Esophagus muscularis mucosa (tissue), 4 donors: ENCODE measurements at regions of chr6 and their contacts with region 1.

Region 1: GRCh38 chr6:912871-913835 is 220.2 kb upstream of the EXOC2 start:
- DNase-seq: no peak
- H3K4me3 ChIP-seq: no peak overlapping the region
- H3K27ac ChIP-seq: peak overlapping the region in 1 of 4 donors; percentile 26
- H3K4me1 ChIP-seq: peaks cover 0 to 15% (median 13%) of the 10 kb centered on the region in 4 donors
- H3K27me3 ChIP-seq: no peaks in the 10 kb centered on the region
- CTCF ChIP-seq: peak; percentile 56 to 74 (median 65)
- EP300 ChIP-seq: no peak
- POLR2A ChIP-seq: no peak

Region 2: GRCh38 chr6:958531-958930 is 45.4 kb after region 1 on chr6:
- intact Hi-C with region 1: no loop called
- DNase-seq: no peak
- H3K4me3 ChIP-seq: no peak overlapping the region
- H3K27ac ChIP-seq: no peak overlapping the region
- H3K4me1 ChIP-seq: no peaks in the 10 kb centered on the region
- H3K27me3 ChIP-seq: no peaks in the 10 kb centered on the region
- CTCF ChIP-seq: no peak
- EP300 ChIP-seq: no peak
- POLR2A ChIP-seq: no peak

Region 3: GRCh38 chr6:1381481-1382330 is 468.6 kb after region 1 on chr6:
- intact Hi-C with region 1: loop called (anchors 2 kb)
- DNase-seq: no peak
- H3K4me3 ChIP-seq: peak overlapping the region; percentile 60 to 86 (median 74)
- H3K27ac ChIP-seq: peak overlapping the region; percentile 90 to 97 (median 94)
- H3K4me1 ChIP-seq: peaks cover 45 to 90% (median 83%) of the 10 kb centered on the region in 4 donors
- H3K27me3 ChIP-seq: peaks cover 0 to 78% (median 8%) of the 10 kb centered on the region in 4 donors
- CTCF ChIP-seq: peak; percentile 90 to 99 (median 97)
- EP300 ChIP-seq: no peak
- POLR2A ChIP-seq: no peak